Gastrocnemius medialis (tissue), 4 donors: ENCODE measurements at regions of chr15 and their contacts with region 1.

Region 1: GRCh38 chr15:91535856-91536500 is 317.5 kb upstream of the SLCO3A1 start:
- DNase-seq: peak; percentile 35 to 63
- ATAC-seq: peak; percentile 80 to 81
- H3K4me3 ChIP-seq: no peak overlapping the region
- H3K27ac ChIP-seq: peak overlapping the region; percentile 84 to 87 (median 85)
- H3K4me1 ChIP-seq: peaks cover 29 to 47% of the 10 kb centered on the region in 2 donors
- H3K27me3 ChIP-seq: no peaks in the 10 kb centered on the region
- CTCF ChIP-seq: no peak
- POLR2A ChIP-seq: peak; percentile 38 to 60

Region 2: GRCh38 chr15:91465696-91466095 is 70.3 kb before region 1 on chr15:
- in situ Hi-C with region 1: no loop called
- intact Hi-C with region 1: no loop called
- DNase-seq: no peak
- ATAC-seq: no peak
- H3K4me3 ChIP-seq: no peak overlapping the region
- H3K27ac ChIP-seq: no peak overlapping the region
- H3K4me1 ChIP-seq: no peaks in the 10 kb centered on the region
- H3K27me3 ChIP-seq: no peaks in the 10 kb centered on the region
- CTCF ChIP-seq: no peak
- POLR2A ChIP-seq: no peak

Region 3: GRCh38 chr15:91561371-91562100 is 25.6 kb after region 1 on chr15:
- in situ Hi-C with region 1: no loop called
- intact Hi-C with region 1: loop called (anchors 1 kb)
- DNase-seq: peak; percentile 64 to 80
- ATAC-seq: peak; percentile 97
- H3K4me3 ChIP-seq: peak overlapping the region in 1 of 4 donors; percentile 9
- H3K27ac ChIP-seq: peak overlapping the region; percentile 77 to 81 (median 78)
- H3K4me1 ChIP-seq: peaks cover 0 to 15% of the 10 kb centered on the region in 2 donors
- H3K27me3 ChIP-seq: no peaks in the 10 kb centered on the region
- CTCF ChIP-seq: no peak
- POLR2A ChIP-seq: no peak

Region 4: GRCh38 chr15:91627473-91628278 is 91.7 kb after region 1 on chr15:
- in situ Hi-C with region 1: no loop called
- intact Hi-C with region 1: loop called (anchors 5 kb)
- DNase-seq: peak; percentile 11 to 39
- ATAC-seq: peak; percentile 65 to 74
- H3K4me3 ChIP-seq: no peak overlapping the region
- H3K27ac ChIP-seq: peak overlapping the region; percentile 62 to 75 (median 72)
- H3K4me1 ChIP-seq: peaks cover 10 to 16% of the 10 kb centered on the region in 2 donors
- H3K27me3 ChIP-seq: no peaks in the 10 kb centered on the region
- CTCF ChIP-seq: no peak
- POLR2A ChIP-seq: no peak